ENCODE measurements at regions of chr6 and their contacts with region 1.

Region 1: GRCh38 chr6:80214436-80215022 is 108.1 kb downstream of the BCKDHB start:
- DNase-seq: no peak
- ATAC-seq: peak; percentile 75

Region 2: DNA sequence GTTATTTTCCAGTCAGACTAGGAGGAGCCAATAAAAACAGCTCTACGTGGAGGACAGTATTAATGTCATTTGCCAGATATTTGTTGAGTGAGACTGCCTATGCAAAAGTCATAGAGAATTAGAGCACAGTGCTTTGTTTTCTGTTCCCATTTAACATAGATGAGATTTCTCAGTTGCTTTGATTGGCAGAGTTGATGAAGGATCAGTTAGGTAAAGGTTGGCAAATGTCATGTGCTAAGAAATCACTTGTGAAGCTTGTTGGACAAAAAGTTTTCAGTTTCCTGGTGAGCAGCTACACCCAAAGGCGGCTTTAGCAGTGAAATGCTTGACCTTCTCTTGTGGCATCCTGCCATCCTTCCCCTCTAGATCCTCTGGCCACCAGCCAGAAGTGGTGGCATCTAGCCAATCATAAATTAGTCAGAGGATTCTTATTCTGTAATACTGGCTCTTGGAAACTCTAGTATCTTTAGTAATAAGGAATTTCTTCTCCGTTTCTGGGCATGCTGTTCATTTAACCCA is 71.1 kb before region 1 on chr6:
- intact Hi-C with region 1: loop called (anchors 5 kb)
- DNase-seq: peak; percentile 45
- ATAC-seq: peak; percentile 62

Region 3: GRCh38 chr6:80457439-80457933 is 243.0 kb after region 1 on chr6:
- intact Hi-C with region 1: loop called (anchors 10 kb)
- DNase-seq: peak; percentile 67
- ATAC-seq: peak; percentile 99

Region 4: GRCh38 chr6:80978366-80978765 is 763.8 kb after region 1 on chr6:
- intact Hi-C with region 1: no loop called
- DNase-seq: no peak
- ATAC-seq: no peak

Measured in Right ventricle myocardium inferior (tissue), 1 donor.